Common myeloid progenitor, CD34-positive (primary cell): ENCODE measurements at regions of chr2 and their contacts with region 1.

Region 1: DNA sequence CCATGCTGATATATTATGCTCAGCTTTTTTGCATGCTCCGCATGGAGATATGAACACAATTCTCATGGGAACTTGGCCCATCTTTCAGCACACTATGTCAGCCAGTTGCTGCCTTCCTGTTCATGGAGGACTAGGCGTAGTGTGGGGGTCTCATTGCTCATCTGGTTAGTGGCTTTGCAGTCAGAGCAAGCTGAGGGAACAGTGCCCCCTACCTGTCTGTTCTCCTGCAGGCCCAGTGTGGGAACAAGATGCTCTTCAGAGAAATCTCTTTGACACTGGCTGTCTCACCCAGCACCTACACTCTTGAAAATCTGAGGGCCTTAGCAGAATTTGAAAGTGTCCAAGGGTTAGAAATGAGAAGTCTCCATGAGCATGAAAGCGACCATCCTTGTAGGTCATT is 47.1 kb downstream of the SPTBN1 start:
- DNase-seq: peak; percentile 73 to 84 (median 81)
- H3K4me3 ChIP-seq: no peak overlapping the region
- H3K27ac ChIP-seq: no peak overlapping the region
- H3K4me1 ChIP-seq: peaks cover 0 to 10% (median 2%) of the 10 kb centered on the region in 4 experiments
- H3K27me3 ChIP-seq: no peaks in the 10 kb centered on the region

Region 2: DNA sequence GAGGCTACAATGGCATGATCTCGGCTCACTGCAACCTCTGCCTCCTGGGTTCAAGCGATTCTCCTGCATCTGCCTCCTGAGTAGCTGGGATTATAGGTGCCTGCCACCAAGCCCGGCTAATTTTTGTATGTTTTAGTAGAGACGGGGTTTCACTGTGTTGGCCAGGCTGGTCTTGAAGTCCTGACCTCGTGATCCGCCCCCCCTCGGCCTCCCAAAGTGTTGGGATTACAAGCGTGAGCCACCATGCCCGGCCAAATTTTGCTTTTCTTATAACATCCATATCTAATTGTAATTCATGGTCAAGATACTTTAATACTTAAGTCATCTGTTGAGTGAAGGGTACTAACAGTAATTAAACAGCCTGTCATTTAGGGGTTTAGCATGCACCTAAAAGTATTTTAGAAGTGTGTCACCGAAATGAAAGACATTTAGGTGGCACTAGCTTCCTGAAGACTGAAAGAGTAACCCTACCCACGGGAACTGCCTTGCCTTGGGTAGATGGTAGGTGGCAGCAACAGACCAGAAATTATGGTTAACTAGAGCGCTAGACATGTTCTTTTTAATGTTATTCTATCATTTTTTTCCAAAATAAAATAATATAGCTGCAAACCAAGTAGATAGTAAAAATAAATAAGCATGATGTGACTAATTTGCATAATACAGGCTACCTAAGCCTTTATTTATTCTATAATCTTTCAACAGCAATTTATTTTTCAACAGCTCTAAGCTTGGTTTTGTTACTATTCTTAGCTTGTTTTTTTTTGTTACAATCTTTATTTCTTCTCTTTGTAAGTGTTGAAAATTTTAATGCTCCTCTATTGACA is 396.3 kb before region 1 on chr2:
- CTCF ChIA-PET with region 1: interaction called, 18 read pairs
- POLR2A ChIA-PET with region 1: no interaction called
- DNase-seq: peak; percentile 69 to 83 (median 78)
- H3K4me3 ChIP-seq: peak overlapping the region in 1 of 7 experiments; percentile 53
- H3K27ac ChIP-seq: no peak overlapping the region
- H3K4me1 ChIP-seq: peaks cover 2 to 9% (median 7%) of the 10 kb centered on the region in 4 experiments
- H3K27me3 ChIP-seq: no peaks in the 10 kb centered on the region

Region 3: GRCh38 chr2:54206596-54206995 is 296.6 kb before region 1 on chr2:
- CTCF ChIA-PET with region 1: interaction called, 26 read pairs
- POLR2A ChIA-PET with region 1: interaction called, 5 read pairs
- DNase-seq: peak; percentile 58 to 81 (median 78)
- H3K4me3 ChIP-seq: peak overlapping the region in 1 of 7 experiments; percentile 38
- H3K27ac ChIP-seq: no peak overlapping the region
- H3K4me1 ChIP-seq: peaks cover 0 to 3% (median 0%) of the 10 kb centered on the region in 4 experiments
- H3K27me3 ChIP-seq: no peaks in the 10 kb centered on the region

Region 4: GRCh38 chr2:54438271-54438670 is 64.9 kb before region 1 on chr2:
- CTCF ChIA-PET with region 1: no interaction called
- POLR2A ChIA-PET with region 1: no interaction called
- DNase-seq: no peak
- H3K4me3 ChIP-seq: no peak overlapping the region
- H3K27ac ChIP-seq: no peak overlapping the region
- H3K4me1 ChIP-seq: peaks cover 0 to 16% (median 9%) of the 10 kb centered on the region in 4 experiments
- H3K27me3 ChIP-seq: no peaks in the 10 kb centered on the region

Region 5: GRCh38 chr2:54570925-54571694 is 67.9 kb after region 1 on chr2:
- CTCF ChIA-PET with region 1: no interaction called
- POLR2A ChIA-PET with region 1: no interaction called
- DNase-seq: peak; percentile 87 to 98 (median 97)
- H3K4me3 ChIP-seq: peak overlapping the region in 5 of 7 experiments; percentile 20 to 62 (median 38)
- H3K27ac ChIP-seq: peak overlapping the region; percentile 26 to 72
- H3K4me1 ChIP-seq: peaks cover 52 to 87% (median 74%) of the 10 kb centered on the region in 4 experiments
- H3K27me3 ChIP-seq: no peaks in the 10 kb centered on the region

Region 6: GRCh38 chr2:54803783-54804751 is 300.9 kb after region 1 on chr2:
- CTCF ChIA-PET with region 1: no interaction called
- POLR2A ChIA-PET with region 1: no interaction called
- DNase-seq: no peak
- H3K4me3 ChIP-seq: no peak overlapping the region
- H3K27ac ChIP-seq: no peak overlapping the region
- H3K4me1 ChIP-seq: peaks cover 0 to 8% (median 0%) of the 10 kb centered on the region in 4 experiments
- H3K27me3 ChIP-seq: no peaks in the 10 kb centered on the region